HAP-1 (cell line): ENCODE measurements at regions of chr17 and their contacts with region 1.

Region 1: DNA sequence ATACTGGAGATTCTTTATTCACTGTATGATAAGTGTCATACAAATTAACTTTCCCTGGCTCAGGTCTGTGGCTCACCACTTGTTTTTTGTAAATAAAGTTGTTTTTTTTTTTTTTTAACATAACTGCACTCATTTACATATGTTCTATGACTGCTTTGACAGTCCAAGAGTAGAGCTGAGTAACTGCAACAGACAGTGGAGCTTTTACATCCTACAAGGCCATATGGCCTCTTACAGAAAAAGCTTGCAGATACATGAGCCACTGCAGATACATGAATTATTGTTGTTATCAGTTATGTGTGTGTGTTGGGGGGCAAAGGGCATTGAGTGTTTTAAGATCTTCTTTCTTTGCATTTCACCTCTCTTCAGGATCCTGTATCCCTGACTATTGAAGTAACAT is 311.7 kb downstream of the BCAS3 start:
- DNase-seq: no peak
- H3K4me3 ChIP-seq: no peak overlapping the region
- H3K4me1 ChIP-seq: no peaks in the 10 kb centered on the region
- H3K27me3 ChIP-seq: no peaks in the 10 kb centered on the region

Region 2: GRCh38 chr17:60284709-60285108 is 704.7 kb before region 1 on chr17:
- in situ Hi-C with region 1: no loop called
- DNase-seq: no peak
- H3K4me3 ChIP-seq: no peak overlapping the region
- H3K4me1 ChIP-seq: peaks cover 5% of the 10 kb centered on the region; the same call in 1 of the 2 replicates
- H3K27me3 ChIP-seq: no peaks in the 10 kb centered on the region

Region 3: DNA sequence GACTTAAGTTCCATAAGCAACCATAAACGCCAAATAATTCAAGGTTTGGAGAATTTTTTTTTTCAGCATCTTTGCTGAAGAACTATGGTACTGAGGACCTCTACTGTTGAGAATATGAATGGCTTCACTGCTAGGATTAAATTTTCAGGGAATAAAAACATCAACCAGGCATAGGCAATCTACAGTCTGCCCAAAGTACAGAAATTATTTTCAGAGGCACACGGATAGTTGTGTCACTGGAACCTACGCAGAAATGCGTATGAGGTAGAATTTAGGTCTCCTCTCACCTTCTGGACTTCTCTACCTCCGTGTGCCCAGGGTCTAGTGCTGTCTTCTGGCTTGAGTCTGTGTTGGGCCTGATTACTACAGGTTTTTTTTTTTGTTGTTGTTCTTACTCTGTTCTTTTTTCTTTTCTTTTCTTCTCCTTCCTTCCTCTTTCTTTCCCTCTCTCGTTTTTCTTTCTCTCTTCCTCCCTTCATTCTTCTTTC is 561.9 kb after region 1 on chr17:
- in situ Hi-C with region 1: loop called (anchors 25 kb)
- DNase-seq: peak in 1 of 2 experiments; percentile 67
- H3K4me3 ChIP-seq: no peak overlapping the region
- H3K4me1 ChIP-seq: peaks cover 3% of the 10 kb centered on the region; the same call in 1 of the 2 replicates
- H3K27me3 ChIP-seq: peaks cover 6% of the 10 kb centered on the region